Ovary (tissue), 10 donors: ENCODE measurements at regions of chr1 and their contacts with region 1.

Region 1: DNA sequence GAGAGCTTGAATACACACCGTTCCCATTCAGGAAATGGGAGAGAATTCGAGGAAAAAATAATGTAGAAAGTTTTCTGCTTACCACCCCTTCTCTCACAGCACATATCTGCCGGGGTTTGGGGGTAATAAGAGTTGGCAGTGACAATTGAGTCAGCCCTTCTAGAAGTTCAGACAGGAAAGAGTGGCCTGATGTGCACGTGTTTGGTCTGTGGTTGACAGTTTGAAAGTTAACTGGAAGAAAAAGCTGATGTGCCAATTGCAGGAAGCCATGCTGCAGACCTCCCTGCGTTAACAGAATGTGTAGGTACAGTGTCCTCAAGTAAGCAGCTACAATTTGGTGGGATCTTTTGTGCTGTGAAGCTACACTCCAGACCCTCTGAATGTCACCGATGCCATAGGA is 50.9 kb downstream of the DHX9 start:
- DNase-seq: no peak
- H3K4me3 ChIP-seq: no peak overlapping the region
- H3K27ac ChIP-seq: no peak overlapping the region
- H3K4me1 ChIP-seq: no peaks in the 10 kb centered on the region
- H3K27me3 ChIP-seq: no peaks in the 10 kb centered on the region
- CTCF ChIP-seq: no peak
- EP300 ChIP-seq: no peak
- POLR2A ChIP-seq: no peak

Region 2: DNA sequence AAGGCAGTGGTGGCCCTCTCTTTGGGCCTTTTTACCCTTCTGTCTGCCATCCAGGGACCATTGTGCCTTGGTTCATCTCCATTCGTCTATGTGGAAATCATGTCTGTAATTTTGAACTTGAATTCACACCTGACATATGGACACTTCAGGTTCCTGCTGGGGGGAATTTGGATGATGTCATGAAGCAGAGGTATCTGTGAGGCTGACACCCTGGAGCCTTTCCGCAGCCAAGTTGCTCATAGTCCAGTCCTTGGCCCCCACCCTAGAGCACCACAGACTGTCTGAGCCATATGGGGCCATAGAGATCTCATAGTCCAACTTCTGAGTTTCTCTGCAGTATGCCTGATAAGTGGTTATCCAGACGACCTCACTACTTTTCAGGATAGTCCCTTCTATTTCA is 1554.4 kb before region 1 on chr1:
- intact Hi-C with region 1: loop called in 1 of 4 experiments (anchors 5 kb)
- DNase-seq: no peak
- H3K4me3 ChIP-seq: no peak overlapping the region
- H3K27ac ChIP-seq: no peak overlapping the region
- H3K4me1 ChIP-seq: no peaks in the 10 kb centered on the region
- H3K27me3 ChIP-seq: no peaks in the 10 kb centered on the region
- CTCF ChIP-seq: no peak
- EP300 ChIP-seq: no peak
- POLR2A ChIP-seq: no peak

Region 3: GRCh38 chr1:182674346-182675246 is 215.4 kb before region 1 on chr1:
- intact Hi-C with region 1: no loop called
- DNase-seq: peak in 3 of 5 donors; percentile 37 to 52 (median 45)
- H3K4me3 ChIP-seq: no peak overlapping the region
- H3K27ac ChIP-seq: peak overlapping the region in 1 of 2 donors; percentile 10
- H3K4me1 ChIP-seq: peaks cover 2% of the 10 kb centered on the region
- H3K27me3 ChIP-seq: no peaks in the 10 kb centered on the region
- CTCF ChIP-seq: no peak
- EP300 ChIP-seq: no peak
- POLR2A ChIP-seq: no peak